PC-9 (cell line): ENCODE measurements at regions of chr11 and their contacts with region 1.

Region 1: GRCh38 chr11:19951558-19952115 is 208.6 kb downstream of the DBX1 start:
- DNase-seq: peak in 1 of 2 experiments; percentile 47
- H3K4me3 ChIP-seq: no peak overlapping the region
- H3K27ac ChIP-seq: no peak overlapping the region
- H3K4me1 ChIP-seq: peaks cover 3% of the 10 kb centered on the region; the same call in 1 of the 2 replicates
- H3K27me3 ChIP-seq: no peaks in the 10 kb centered on the region
- CTCF ChIP-seq: peak; percentile 85

Region 2: DNA sequence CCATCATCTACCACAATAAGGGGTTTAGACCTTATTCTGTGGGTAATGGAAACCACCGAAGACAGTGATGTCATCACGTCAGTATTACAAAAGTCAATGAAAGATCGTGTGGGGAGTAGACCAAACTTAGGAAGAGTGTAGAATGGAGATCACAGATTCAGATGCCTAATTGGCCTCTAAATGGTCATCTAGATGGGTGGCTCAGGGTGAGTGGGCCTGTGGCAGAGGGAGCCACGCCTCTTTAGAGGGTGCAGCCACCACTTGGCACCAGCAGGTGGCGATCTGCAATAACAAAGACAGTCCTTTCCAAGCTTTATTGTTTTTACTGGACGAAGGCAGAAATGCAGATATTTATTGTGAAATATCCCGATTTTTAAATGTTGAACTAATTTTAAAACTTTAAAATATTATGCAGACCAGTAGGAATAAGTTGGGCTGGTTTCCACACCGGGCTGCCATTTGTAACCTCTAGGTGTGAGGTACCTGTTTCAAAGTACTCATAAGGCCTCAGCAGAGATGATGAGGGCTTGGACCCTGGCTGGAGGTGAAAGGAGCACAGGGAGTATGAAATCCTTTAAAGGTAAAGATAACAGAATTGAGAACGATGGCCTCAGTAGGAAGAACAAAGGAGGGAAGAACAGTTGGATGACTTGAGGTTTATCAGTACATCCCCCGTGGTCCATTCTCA is 13.3 kb before region 1 on chr11:
- CTCF ChIA-PET with region 1: interaction called, 11 read pairs
- POLR2A ChIA-PET with region 1: no interaction called
- intact Hi-C with region 1: no loop called
- DNase-seq: peak in 1 of 2 experiments; percentile 45
- H3K4me3 ChIP-seq: no peak overlapping the region
- H3K27ac ChIP-seq: peak overlapping the region; percentile 56
- H3K4me1 ChIP-seq: peaks cover 29% of the 10 kb centered on the region
- H3K27me3 ChIP-seq: no peaks in the 10 kb centered on the region
- CTCF ChIP-seq: peak; percentile 85

Region 3: DNA sequence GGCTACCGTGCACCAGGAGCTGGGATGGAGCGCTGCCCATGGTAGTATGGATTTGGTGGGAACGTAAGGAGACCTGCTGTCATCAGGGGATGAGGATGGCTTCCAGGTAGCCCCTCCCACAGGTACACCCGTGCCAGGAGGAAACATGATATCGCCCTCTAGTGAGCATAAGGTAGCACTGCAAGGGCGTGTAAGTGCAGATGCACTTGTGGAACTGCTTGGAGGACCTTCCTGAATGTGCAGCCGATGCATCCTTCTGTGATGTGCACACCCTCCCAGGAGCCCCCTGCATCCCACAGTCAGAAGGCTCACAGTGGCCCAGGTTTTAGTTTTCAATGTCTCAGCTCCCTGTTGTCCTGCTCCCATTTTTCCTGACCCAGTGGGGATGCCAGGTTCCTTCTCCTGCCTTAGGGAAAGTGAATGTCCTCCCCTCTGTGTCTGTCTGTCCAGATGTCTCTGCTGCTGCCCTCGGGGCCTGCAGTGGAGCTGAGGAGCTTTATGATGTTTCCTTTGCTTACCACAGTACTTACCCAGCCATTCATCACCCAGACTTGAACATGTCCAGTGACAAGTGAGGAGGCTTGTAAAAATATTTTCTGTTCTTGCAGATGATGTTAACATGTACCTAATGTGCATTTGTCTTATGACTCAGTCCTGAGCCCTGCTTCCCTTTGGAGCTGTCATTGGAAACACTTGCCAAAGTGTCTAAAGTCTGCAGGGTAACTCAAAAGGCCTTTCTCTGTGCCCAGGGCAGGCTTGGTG is 159.5 kb after region 1 on chr11:
- CTCF ChIA-PET with region 1: no interaction called
- POLR2A ChIA-PET with region 1: no interaction called
- intact Hi-C with region 1: loop called (anchors 1 kb)
- DNase-seq: peak; percentile 58 to 62
- H3K4me3 ChIP-seq: no peak overlapping the region
- H3K27ac ChIP-seq: 0 out of 2 replicates have a peak overlapping the region, but pooled peaks have one; percentile 51
- H3K4me1 ChIP-seq: peaks cover 22% of the 10 kb centered on the region
- H3K27me3 ChIP-seq: no peaks in the 10 kb centered on the region
- CTCF ChIP-seq: peak; percentile 96

Region 4: DNA sequence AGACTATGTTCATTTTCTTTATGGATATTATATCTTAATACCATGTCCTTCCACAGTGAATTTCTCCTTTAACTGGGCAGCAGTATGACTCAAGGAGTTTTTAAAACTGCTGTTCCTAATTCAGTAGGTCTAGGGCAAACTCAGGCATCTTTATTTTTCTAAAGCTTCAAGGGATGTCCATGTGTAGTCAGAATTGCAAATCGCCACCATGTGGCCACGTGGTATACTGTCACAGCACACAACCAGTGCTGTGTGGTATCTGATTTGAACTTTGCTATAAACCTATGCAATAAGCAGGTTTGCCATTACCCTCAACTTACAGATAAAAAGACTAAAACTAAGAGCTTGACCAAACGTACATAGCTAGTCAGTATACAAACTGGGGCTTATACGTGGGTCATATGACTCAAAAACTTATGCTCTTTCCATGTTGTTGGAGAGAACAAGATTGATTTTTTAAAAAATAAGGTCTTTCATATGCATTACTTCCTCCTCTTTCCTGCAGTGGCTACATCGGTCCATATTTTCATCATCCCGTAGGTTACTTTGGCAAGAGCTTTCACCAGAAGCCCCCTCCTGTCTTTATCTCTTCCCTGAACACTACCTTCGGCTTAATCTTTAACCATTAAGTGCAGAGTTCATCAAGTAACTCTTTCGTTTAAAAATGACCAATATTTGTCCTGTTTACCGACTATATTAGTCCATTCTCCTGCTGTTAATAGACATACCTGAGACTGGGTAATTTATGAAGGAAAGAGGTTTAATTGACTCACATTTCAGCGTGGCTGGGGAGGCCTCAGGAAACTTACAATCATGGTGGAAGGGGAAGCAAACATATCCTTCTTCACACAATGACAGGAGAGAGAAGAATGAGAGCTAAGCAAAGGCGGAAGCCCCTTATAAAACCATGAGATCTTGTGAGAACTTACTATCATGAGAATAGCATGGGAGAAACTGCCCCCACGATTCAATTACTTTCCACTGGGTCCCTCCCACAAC is 403.9 kb after region 1 on chr11:
- CTCF ChIA-PET with region 1: interaction called, 3 read pairs
- POLR2A ChIA-PET with region 1: no interaction called
- intact Hi-C with region 1: loop called (anchors 10 kb)
- DNase-seq: peak in 1 of 2 experiments; percentile 46
- H3K4me3 ChIP-seq: no peak overlapping the region
- H3K27ac ChIP-seq: no peak overlapping the region
- H3K4me1 ChIP-seq: no peaks in the 10 kb centered on the region; the same call in 1 of the 2 replicates
- H3K27me3 ChIP-seq: no peaks in the 10 kb centered on the region
- CTCF ChIP-seq: peak; percentile 74